ENCODE measurements at regions of chr10 and their contacts with region 1.

Region 1: GRCh38 chr10:31340343-31340742 is 21.3 kb downstream of the ZEB1 start:
- DNase-seq: peak; percentile 52
- ATAC-seq: peak; percentile 45
- H3K4me3 Mint-ChIP-seq: no peak overlapping the region
- H3K27ac Mint-ChIP-seq: no peak overlapping the region
- H3K4me1 Mint-ChIP-seq: peaks cover 22% of the 10 kb centered on the region
- H3K27me3 Mint-ChIP-seq: no peaks in the 10 kb centered on the region

Region 2: DNA sequence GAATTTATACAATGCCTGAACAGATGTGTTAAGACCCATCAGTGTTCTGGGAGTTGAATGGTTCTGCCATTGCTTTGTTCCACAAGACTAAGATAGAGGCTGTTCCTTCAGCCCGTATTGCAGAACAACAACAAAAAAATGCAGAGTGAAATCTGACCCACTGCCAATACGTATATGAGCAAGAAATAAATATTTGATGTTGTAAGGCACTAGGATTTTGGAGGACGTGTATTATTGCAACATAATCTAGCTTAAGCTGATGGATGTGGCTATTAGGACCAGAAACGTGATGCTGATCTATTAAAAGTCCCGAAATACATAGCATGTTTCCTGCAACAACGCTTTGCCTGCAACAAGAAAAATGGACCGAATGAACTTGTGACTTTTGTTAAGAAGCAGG is 1161.8 kb before region 1 on chr10:
- CTCF ChIA-PET with region 1: no interaction called
- POLR2A ChIA-PET with region 1: no interaction called
- intact Hi-C with region 1: no loop called
- DNase-seq: no peak
- ATAC-seq: no peak
- H3K4me3 Mint-ChIP-seq: no peak overlapping the region
- H3K27ac Mint-ChIP-seq: no peak overlapping the region
- H3K4me1 Mint-ChIP-seq: no peaks in the 10 kb centered on the region
- H3K27me3 Mint-ChIP-seq: peaks cover 4% of the 10 kb centered on the region

Region 3: GRCh38 chr10:31101123-31101522 is 239.2 kb before region 1 on chr10:
- CTCF ChIA-PET with region 1: interaction called, 4 read pairs
- POLR2A ChIA-PET with region 1: interaction called, 3 read pairs
- intact Hi-C with region 1: loop called in 1 of 2 experiments (anchors 1 kb)
- DNase-seq: peak; percentile 86
- ATAC-seq: peak; percentile 96
- H3K4me3 Mint-ChIP-seq: no peak overlapping the region
- H3K27ac Mint-ChIP-seq: peak overlapping the region; percentile 91
- H3K4me1 Mint-ChIP-seq: peaks cover 44% of the 10 kb centered on the region
- H3K27me3 Mint-ChIP-seq: no peaks in the 10 kb centered on the region

Region 4: GRCh38 chr10:31353574-31353973 is 13.2 kb after region 1 on chr10:
- CTCF ChIA-PET with region 1: interaction called, 21 read pairs
- POLR2A ChIA-PET with region 1: no interaction called
- intact Hi-C with region 1: loop called (anchors 1 kb)
- DNase-seq: peak; percentile 27
- ATAC-seq: peak; percentile 99
- H3K4me3 Mint-ChIP-seq: no peak overlapping the region
- H3K27ac Mint-ChIP-seq: no peak overlapping the region
- H3K4me1 Mint-ChIP-seq: peaks cover 59% of the 10 kb centered on the region
- H3K27me3 Mint-ChIP-seq: no peaks in the 10 kb centered on the region

Region 5: GRCh38 chr10:31603235-31604087 is 263.1 kb after region 1 on chr10:
- CTCF ChIA-PET with region 1: interaction called, 3 read pairs
- POLR2A ChIA-PET with region 1: no interaction called
- intact Hi-C with region 1: loop called in 1 of 2 experiments (anchors 10 kb)
- DNase-seq: peak; percentile 94
- ATAC-seq: peak; percentile 92
- H3K4me3 Mint-ChIP-seq: peak overlapping the region; percentile 76
- H3K27ac Mint-ChIP-seq: peak overlapping the region; percentile 17
- H3K4me1 Mint-ChIP-seq: peaks cover 33% of the 10 kb centered on the region
- H3K27me3 Mint-ChIP-seq: peaks cover 2% of the 10 kb centered on the region

Region 6: DNA sequence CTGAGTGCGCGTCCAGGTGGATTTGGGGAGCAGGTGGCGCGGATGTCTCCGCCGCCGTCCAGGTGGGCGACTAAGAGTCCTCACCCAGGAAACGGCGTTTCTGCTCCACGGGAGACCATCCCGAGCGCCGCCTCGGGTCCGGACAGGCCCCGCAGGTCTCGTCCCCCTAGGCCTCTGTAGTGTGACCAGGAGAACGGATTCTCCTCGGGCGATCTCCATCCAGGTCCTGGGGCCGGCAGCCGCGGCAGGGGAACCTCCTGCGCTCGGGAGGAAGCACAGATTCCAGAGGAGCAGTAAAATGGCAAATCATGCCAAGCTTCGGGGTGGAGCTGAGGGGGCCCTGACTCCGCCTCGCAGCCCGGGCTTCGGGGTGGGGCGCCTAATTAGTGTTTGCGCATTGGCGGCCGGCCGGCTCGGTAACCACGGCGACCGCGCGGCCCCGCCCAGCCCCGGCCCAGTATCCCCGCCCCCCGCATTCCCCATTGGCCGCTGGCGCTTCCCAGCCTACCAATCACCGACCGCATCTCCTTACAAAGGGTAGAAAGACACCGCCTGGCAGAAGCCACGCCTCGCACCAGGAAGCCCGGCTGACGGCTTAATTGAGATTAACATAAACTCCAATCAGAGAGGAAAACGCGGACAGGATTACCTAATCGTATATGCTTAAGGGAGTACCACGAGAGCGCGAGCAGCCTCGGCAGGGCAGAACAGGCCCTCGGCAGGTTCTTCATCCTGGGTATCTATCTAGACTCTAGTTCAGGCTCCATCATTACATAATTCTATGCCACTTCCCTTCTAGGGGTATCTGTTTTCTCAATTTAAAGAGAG is 419.7 kb after region 1 on chr10:
- CTCF ChIA-PET with region 1: no interaction called
- POLR2A ChIA-PET with region 1: no interaction called
- intact Hi-C with region 1: loop called in 1 of 2 experiments (anchors 10 kb)
- DNase-seq: peak; percentile 97
- ATAC-seq: peak; percentile 94
- H3K4me3 Mint-ChIP-seq: peak overlapping the region; percentile 91
- H3K27ac Mint-ChIP-seq: peak overlapping the region; percentile 94
- H3K4me1 Mint-ChIP-seq: peaks cover 15% of the 10 kb centered on the region
- H3K27me3 Mint-ChIP-seq: no peaks in the 10 kb centered on the region

Measured in activated CD4-positive, alpha-beta T cell treated with anti-CD3 and anti-CD28 coated beads for 36 hours (primary cell).